Caco-2 (cell line): ENCODE measurements at regions of chr2 and their contacts with region 1.

Region 1: DNA sequence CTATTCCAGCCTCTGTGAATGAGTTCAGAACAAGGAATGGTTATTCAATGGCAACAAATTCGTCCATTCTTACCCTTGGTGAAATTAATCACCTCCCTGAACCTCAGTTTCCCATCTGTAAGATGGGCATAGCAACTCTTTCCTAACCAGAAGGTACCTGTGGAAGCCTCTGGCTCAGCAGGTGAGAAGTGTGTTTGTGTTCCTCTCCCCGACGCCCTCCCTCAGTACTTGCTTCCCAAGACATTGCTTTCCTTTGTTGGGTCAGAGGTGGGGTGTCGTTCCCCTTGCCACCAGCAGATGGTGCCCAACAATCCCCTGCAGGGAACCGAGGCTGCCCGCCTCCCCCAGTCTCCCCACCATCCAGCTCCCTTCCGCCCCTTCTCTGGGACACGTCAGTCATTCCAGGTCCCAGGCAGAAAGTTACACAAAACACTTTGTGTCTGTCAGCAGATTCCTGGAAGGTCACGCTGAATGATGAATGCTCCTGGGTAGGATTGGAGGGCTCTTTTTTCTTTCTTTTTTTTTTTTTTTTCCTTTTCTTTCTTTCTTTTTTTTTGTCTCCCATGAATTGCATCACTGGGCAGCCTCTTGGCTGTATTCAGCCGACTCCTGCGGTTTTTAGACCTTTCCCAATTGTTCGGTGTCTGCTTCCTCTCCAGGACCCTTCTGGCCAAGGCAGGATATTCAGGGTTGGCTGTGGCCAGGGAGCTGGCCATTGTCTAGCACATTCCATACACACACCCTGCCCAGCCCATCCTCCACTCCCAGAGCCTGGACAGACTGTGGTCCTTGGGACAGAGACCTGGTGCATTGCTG is 117.3 kb downstream of the LPIN1 start:
- DNase-seq: peak; percentile 79 to 81
- H3K4me3 ChIP-seq: no peak overlapping the region
- H3K4me3 Mint-ChIP-seq: peak overlapping the region; percentile 19
- H3K27ac Mint-ChIP-seq: no peak overlapping the region
- H3K4me1 ChIP-seq: no peaks in the 10 kb centered on the region
- H3K4me1 Mint-ChIP-seq: no peaks in the 10 kb centered on the region
- H3K27me3 ChIP-seq: no peaks in the 10 kb centered on the region
- H3K27me3 Mint-ChIP-seq: peaks cover 4% of the 10 kb centered on the region
- CTCF ChIP-seq: peak; percentile 91 to 92

Region 2: GRCh38 chr2:11904029-11904428 is 40.3 kb after region 1 on chr2:
- CTCF ChIA-PET with region 1: no interaction called
- POLR2A ChIA-PET with region 1: no interaction called
- intact Hi-C with region 1: loop called (anchors 2 kb)
- DNase-seq: no peak
- H3K4me3 ChIP-seq: no peak overlapping the region
- H3K4me3 Mint-ChIP-seq: no peak overlapping the region
- H3K27ac Mint-ChIP-seq: no peak overlapping the region
- H3K4me1 ChIP-seq: no peaks in the 10 kb centered on the region
- H3K4me1 Mint-ChIP-seq: no peaks in the 10 kb centered on the region
- H3K27me3 ChIP-seq: no peaks in the 10 kb centered on the region
- H3K27me3 Mint-ChIP-seq: peaks cover 10% of the 10 kb centered on the region
- CTCF ChIP-seq: peak in 1 of 2 experiments; percentile 21

Region 3: DNA sequence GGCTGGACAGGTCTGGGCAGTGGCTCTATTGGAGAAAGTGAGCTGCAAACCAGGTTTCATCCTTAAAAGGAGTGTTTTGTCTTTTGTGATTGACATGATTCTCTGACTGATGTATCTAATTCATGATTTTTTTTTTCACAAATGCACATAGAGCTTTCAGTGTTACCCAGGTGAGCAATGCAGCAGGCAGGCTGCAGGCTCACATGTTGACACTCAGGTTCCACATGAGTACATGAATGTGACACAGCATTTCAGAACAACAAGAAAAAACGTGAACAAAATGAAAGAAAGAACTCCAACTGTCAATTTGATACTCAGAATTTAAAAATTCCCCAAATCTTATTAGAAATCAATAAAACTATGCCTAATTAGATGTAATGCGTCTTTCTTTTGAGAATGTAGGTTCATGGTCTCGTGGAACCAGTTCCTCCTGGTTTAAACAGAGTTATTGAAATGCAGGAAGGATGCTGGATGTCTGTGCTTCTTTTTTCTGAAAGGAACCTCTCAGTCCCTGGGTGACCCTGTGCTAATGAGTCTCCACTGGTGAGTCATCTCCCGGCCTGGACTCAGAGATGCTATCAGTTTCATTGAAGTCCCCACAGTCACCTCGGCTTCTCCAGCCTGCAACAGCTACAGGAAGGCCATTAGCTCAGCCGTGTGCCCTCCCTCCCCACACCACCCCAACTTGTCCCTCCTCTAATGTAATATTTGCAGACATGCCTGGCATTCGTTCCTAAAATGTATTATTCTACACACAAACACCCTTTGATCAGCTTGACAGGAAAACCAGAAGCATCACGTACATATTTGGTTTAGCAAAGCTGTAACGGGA is 313.1 kb after region 1 on chr2:
- CTCF ChIA-PET with region 1: no interaction called
- POLR2A ChIA-PET with region 1: no interaction called
- intact Hi-C with region 1: no loop called
- DNase-seq: peak in 1 of 2 experiments; percentile 43
- H3K4me3 ChIP-seq: no peak overlapping the region
- H3K4me3 Mint-ChIP-seq: no peak overlapping the region
- H3K27ac Mint-ChIP-seq: no peak overlapping the region
- H3K4me1 ChIP-seq: no peaks in the 10 kb centered on the region
- H3K4me1 Mint-ChIP-seq: no peaks in the 10 kb centered on the region
- H3K27me3 ChIP-seq: no peaks in the 10 kb centered on the region; the same call in 1 of the 2 replicates
- H3K27me3 Mint-ChIP-seq: peaks cover 8% of the 10 kb centered on the region
- CTCF ChIP-seq: no peak